ENCODE measurements at regions of chr3 and their contacts with region 1.

Region 1: GRCh38 chr3:99094606-99095005 is 193.1 kb upstream of the DCBLD2 start:
- DNase-seq: no peak
- H3K4me3 Mint-ChIP-seq: no peak overlapping the region
- H3K27ac Mint-ChIP-seq: no peak overlapping the region
- H3K4me1 Mint-ChIP-seq: no peaks in the 10 kb centered on the region
- H3K27me3 Mint-ChIP-seq: no peaks in the 10 kb centered on the region

Region 2: GRCh38 chr3:98240131-98240530 is 854.5 kb before region 1 on chr3:
- CTCF ChIA-PET with region 1: no interaction called
- POLR2A ChIA-PET with region 1: no interaction called
- intact Hi-C with region 1: no loop called
- DNase-seq: no peak
- H3K4me3 Mint-ChIP-seq: no peak overlapping the region
- H3K27ac Mint-ChIP-seq: no peak overlapping the region
- H3K4me1 Mint-ChIP-seq: no peaks in the 10 kb centered on the region
- H3K27me3 Mint-ChIP-seq: peaks cover 7% of the 10 kb centered on the region

Region 3: GRCh38 chr3:98824256-98824655 is 270.4 kb before region 1 on chr3:
- CTCF ChIA-PET with region 1: no interaction called
- POLR2A ChIA-PET with region 1: no interaction called
- intact Hi-C with region 1: loop called (anchors 10 kb)
- DNase-seq: no peak
- H3K4me3 Mint-ChIP-seq: no peak overlapping the region
- H3K27ac Mint-ChIP-seq: no peak overlapping the region
- H3K4me1 Mint-ChIP-seq: no peaks in the 10 kb centered on the region
- H3K27me3 Mint-ChIP-seq: no peaks in the 10 kb centered on the region

Region 4: DNA sequence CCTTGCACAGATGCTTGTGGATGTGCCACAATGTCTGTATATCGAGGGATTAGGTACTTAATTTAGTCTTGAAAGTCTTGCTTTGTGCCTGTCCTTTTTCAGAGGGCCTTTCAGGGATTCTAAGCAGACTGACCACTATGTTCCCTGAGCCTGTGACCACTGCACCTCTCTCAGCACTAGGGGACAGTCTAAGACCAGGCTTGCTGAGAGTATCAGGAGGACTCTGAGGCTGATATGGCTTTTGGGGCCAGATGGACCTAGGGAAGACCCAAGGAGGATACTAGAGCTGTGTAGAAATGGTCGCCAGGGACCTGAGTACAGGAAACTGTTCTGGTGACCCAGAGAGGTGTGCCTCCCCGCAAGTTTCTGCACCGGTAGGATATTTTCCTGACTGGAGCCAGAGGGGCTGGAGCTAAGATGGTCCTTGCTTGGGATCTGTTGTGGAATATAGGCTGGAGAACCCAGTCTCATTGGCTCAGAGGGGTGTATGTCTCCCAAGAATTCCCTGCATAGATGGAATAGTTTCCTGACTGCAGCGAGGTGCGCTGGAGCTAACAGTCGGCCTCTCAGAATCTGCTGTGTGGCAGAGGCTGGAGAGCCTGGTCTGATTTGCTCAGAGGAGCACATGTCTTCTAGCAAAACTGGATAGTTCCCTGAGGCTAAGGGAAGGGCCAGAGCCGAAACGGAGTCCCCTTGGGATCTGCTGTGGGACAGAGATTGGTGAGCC is 20.1 kb after region 1 on chr3:
- CTCF ChIA-PET with region 1: no interaction called
- POLR2A ChIA-PET with region 1: no interaction called
- intact Hi-C with region 1: no loop called
- DNase-seq: no peak
- H3K4me3 Mint-ChIP-seq: no peak overlapping the region
- H3K27ac Mint-ChIP-seq: no peak overlapping the region
- H3K4me1 Mint-ChIP-seq: no peaks in the 10 kb centered on the region
- H3K27me3 Mint-ChIP-seq: no peaks in the 10 kb centered on the region